ENCODE measurements at regions of chr13 and their contacts with region 1.

Region 1: DNA sequence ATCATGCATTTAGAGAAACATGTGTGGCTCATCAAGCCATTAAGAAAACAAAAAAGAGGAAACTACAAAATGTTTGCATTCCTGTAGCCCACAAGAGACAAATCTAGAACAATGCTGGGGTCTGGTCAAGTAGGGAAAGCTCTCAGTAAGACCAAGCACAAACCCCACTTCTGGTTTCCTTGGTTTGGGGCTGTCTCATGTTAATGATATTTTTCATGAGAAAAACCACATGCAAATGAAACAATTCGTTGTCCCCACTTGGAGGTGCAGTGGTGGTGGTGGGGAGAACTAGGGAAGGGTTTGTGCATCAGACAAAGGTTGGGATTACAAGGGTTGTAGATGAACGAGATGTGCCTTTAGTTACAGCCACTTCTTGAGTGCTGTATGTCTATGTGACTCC is 7.0 kb upstream of the RB1 start:
- DNase-seq: no peak
- ATAC-seq: no peak

Region 2: DNA sequence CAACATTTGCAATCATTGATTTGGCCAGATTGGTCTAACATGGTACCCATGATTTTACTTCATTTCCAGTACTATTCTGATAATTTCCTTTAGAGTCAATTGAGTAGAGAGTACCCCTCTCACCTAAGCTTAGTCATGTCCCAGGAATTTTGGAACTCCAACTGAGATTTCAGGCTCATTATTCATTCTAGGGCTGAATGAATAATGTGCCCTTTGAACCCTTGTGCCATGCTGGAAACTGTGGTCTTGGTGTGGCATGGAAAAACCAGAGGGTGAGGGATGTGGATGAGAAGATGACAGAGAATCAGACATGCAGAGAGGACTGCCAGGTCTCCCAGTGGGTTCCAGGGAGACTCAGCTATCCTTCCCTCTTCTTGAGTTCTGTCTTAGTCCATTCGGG is 33.3 kb before region 1 on chr13:
- intact Hi-C with region 1: loop called (anchors 5 kb)
- DNase-seq: no peak
- ATAC-seq: no peak